Endothelial cell of umbilical vein (primary cell): ENCODE measurements at regions of chr17 and their contacts with region 1.

Region 1: GRCh38 chr17:80866147-80866793 is 125.4 kb upstream of the CHMP6 start:
- DNase-seq: peak; percentile 84
- H3K4me3 ChIP-seq: no peak overlapping the region
- H3K27ac ChIP-seq: no peak overlapping the region
- H3K4me1 ChIP-seq: peaks cover 5% of the 10 kb centered on the region
- H3K27me3 ChIP-seq: no peaks in the 10 kb centered on the region
- CTCF ChIP-seq: peak; percentile 75 to 83
- POLR2A ChIP-seq: no peak

Region 2: DNA sequence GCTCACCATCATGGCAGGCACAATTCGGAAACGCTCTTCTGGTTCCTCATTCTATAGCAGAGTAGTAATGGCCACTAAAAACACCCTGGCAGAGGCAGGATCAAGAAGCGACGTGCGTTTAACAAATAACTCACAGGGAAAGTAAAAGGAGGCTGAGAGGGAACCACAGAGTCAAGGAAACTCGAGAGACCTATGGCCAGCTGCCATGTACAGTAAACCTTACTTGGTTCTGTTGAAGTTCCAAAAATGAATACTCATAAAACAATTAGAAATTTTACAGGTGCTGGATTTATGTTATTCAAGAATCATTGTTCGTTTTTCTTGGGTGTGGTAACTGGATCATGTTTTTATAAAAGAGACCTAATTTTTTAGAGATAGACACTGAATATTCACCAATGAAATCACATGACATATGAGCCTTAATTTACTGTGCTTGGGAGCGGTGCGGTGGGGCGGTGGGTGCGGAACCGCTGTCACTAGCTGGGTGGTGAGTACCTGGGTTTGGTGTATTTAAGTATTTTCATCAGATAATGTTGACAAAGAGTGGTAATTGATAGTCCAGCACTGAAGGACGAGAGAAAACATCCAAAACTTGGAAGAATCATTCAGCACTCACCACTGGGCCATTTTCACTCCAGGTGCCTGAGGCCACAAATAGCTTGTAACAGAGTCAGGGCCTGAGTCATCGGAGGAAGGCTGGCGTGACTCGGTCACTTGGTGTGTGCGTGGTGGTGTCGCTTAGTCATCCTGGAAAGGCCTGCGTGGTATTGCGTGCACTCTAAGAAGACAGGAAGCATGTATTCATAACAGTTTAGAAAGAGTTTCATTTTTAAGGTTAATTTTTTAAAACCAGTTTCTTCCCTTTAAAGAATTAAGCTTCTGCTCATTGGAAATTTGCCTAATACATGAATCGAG is 10.1 kb before region 1 on chr17:
- CTCF ChIA-PET with region 1: interaction called, 13 read pairs
- POLR2A ChIA-PET with region 1: no interaction called
- dilution Hi-C with region 1: no loop called
- intact Hi-C with region 1: no loop called
- DNase-seq: peak; percentile 95
- H3K4me3 ChIP-seq: no peak overlapping the region
- H3K27ac ChIP-seq: peak overlapping the region; percentile 97
- H3K4me1 ChIP-seq: peaks cover 26% of the 10 kb centered on the region
- H3K27me3 ChIP-seq: no peaks in the 10 kb centered on the region
- CTCF ChIP-seq: no peak
- POLR2A ChIP-seq: no peak

Region 3: GRCh38 chr17:80892019-80892855 is 26.0 kb after region 1 on chr17:
- CTCF ChIA-PET with region 1: interaction called, 9 read pairs
- POLR2A ChIA-PET with region 1: no interaction called
- dilution Hi-C with region 1: no loop called
- intact Hi-C with region 1: loop called (anchors 1 kb)
- DNase-seq: peak; percentile 91
- H3K4me3 ChIP-seq: no peak overlapping the region
- H3K27ac ChIP-seq: peak overlapping the region; percentile 79
- H3K4me1 ChIP-seq: peaks cover 28% of the 10 kb centered on the region
- H3K27me3 ChIP-seq: no peaks in the 10 kb centered on the region
- CTCF ChIP-seq: no peak
- POLR2A ChIP-seq: no peak

Region 4: DNA sequence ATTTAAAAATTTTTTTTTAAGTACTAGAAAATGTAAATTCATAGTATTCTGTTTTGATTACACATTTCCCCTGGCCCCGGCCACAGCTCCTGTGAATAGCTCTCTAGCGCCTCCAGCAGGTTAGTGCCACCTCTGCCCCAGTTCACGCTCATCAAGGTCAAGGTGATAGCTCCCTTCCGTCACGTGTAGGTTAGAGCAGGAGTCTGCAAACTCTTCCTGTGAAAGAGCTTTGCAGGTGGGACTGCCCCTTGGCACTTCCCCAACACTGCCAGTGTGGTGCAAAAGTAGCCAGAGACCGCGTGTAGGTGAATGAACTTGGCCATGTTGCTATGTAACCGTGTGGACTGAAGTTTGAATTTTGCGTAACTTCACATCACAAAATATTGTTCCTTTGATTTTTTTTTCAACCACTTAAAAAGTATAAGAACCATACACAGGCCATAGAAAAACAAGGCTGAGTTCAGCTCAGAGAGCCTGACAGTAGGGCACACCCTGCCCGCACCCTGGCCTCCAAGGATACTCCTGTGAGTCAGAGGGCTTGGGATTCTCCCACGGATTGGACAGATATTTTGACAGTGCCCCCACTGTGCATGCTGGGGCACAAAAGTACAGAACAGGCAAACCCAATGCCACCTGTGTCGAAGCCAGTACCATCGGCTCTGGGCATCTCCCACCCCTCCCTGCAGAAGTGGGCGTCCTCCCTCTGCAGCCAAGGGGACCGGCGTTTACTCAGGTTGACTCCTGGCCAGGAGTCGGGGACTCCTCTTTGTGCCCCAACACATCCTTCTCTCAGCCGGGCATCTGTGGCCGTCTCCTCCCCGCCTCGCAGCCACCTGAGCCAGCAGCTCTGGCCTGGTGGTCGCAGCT is 33.4 kb after region 1 on chr17:
- CTCF ChIA-PET with region 1: interaction called, 35 read pairs
- POLR2A ChIA-PET with region 1: no interaction called
- dilution Hi-C with region 1: no loop called
- intact Hi-C with region 1: loop called (anchors 1 kb)
- DNase-seq: peak; percentile 22
- H3K4me3 ChIP-seq: no peak overlapping the region
- H3K27ac ChIP-seq: no peak overlapping the region
- H3K4me1 ChIP-seq: peaks cover 18% of the 10 kb centered on the region
- H3K27me3 ChIP-seq: no peaks in the 10 kb centered on the region
- CTCF ChIP-seq: peak; percentile 53 to 69
- POLR2A ChIP-seq: no peak

Region 5: GRCh38 chr17:80927791-80928216 is 61.5 kb after region 1 on chr17:
- CTCF ChIA-PET with region 1: interaction called, 54 read pairs
- POLR2A ChIA-PET with region 1: no interaction called
- dilution Hi-C with region 1: no loop called
- intact Hi-C with region 1: loop called (anchors 1 kb)
- DNase-seq: peak; percentile 96
- H3K4me3 ChIP-seq: no peak overlapping the region
- H3K27ac ChIP-seq: peak overlapping the region; percentile 54
- H3K4me1 ChIP-seq: peaks cover 18% of the 10 kb centered on the region
- H3K27me3 ChIP-seq: no peaks in the 10 kb centered on the region
- CTCF ChIP-seq: peak; percentile 80 to 84
- POLR2A ChIP-seq: no peak

Region 6: GRCh38 chr17:80970044-80970761 is 103.9 kb after region 1 on chr17:
- CTCF ChIA-PET with region 1: interaction called, 5 read pairs
- POLR2A ChIA-PET with region 1: no interaction called
- dilution Hi-C with region 1: no loop called
- intact Hi-C with region 1: loop called (anchors 1 kb)
- DNase-seq: no peak
- H3K4me3 ChIP-seq: no peak overlapping the region
- H3K27ac ChIP-seq: no peak overlapping the region
- H3K4me1 ChIP-seq: no peaks in the 10 kb centered on the region
- H3K27me3 ChIP-seq: no peaks in the 10 kb centered on the region
- CTCF ChIP-seq: peak; percentile 12 to 44
- POLR2A ChIP-seq: no peak

Region 7: GRCh38 chr17:80981062-80981902 is 115.0 kb after region 1 on chr17:
- CTCF ChIA-PET with region 1: no interaction called
- POLR2A ChIA-PET with region 1: no interaction called
- dilution Hi-C with region 1: no loop called
- intact Hi-C with region 1: loop called (anchors 1 kb)
- DNase-seq: no peak
- H3K4me3 ChIP-seq: no peak overlapping the region
- H3K27ac ChIP-seq: no peak overlapping the region
- H3K4me1 ChIP-seq: no peaks in the 10 kb centered on the region
- H3K27me3 ChIP-seq: no peaks in the 10 kb centered on the region
- CTCF ChIP-seq: peak; percentile 57 to 71
- POLR2A ChIP-seq: no peak

Region 8: GRCh38 chr17:81049973-81050551 is 183.8 kb after region 1 on chr17:
- CTCF ChIA-PET with region 1: no interaction called
- POLR2A ChIA-PET with region 1: no interaction called
- dilution Hi-C with region 1: no loop called
- intact Hi-C with region 1: no loop called
- DNase-seq: no peak
- H3K4me3 ChIP-seq: no peak overlapping the region
- H3K27ac ChIP-seq: no peak overlapping the region
- H3K4me1 ChIP-seq: peaks cover 19% of the 10 kb centered on the region
- H3K27me3 ChIP-seq: no peaks in the 10 kb centered on the region
- CTCF ChIP-seq: no peak
- POLR2A ChIP-seq: no peak